Heart right ventricle (tissue), 16 donors: ENCODE measurements at regions of chr2 and their contacts with region 1.

Region 1: DNA sequence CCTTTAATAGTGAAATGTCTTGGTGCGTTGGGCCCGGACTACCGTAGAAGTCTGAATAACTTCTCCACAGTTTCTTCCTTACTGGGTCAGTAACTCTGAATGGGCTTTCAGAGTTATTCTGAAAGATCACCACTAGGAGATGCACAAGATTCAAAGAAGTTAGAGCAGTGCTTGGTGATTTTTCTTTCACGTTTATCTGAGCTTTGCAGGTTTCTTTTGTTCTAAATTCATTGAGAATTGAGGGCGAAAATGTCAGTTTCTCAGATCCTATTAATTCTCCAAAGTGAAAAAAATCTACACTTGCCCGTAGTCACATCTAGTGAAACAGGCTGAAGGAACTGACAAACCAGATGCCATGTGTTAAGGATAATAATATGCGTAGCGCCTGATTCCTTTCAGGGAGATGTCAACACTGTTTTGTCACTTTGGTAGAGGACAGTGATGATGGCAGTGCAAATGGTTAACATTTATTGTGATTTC is 70.1 kb downstream of the QPCT start:
- DNase-seq: no peak
- ATAC-seq: peak; percentile 65 to 91 (median 82)
- H3K4me3 ChIP-seq: peak overlapping the region in 3 of 10 donors; percentile 4 to 29 (median 8)
- H3K27ac ChIP-seq: peak overlapping the region in 6 of 10 donors; percentile 8 to 69 (median 66)
- H3K4me1 ChIP-seq: peaks cover 0 to 19% (median 14%) of the 10 kb centered on the region in 9 donors
- H3K27me3 ChIP-seq: no peaks in the 10 kb centered on the region
- CTCF ChIP-seq: peak; percentile 68 to 92 (median 80)

Region 2: DNA sequence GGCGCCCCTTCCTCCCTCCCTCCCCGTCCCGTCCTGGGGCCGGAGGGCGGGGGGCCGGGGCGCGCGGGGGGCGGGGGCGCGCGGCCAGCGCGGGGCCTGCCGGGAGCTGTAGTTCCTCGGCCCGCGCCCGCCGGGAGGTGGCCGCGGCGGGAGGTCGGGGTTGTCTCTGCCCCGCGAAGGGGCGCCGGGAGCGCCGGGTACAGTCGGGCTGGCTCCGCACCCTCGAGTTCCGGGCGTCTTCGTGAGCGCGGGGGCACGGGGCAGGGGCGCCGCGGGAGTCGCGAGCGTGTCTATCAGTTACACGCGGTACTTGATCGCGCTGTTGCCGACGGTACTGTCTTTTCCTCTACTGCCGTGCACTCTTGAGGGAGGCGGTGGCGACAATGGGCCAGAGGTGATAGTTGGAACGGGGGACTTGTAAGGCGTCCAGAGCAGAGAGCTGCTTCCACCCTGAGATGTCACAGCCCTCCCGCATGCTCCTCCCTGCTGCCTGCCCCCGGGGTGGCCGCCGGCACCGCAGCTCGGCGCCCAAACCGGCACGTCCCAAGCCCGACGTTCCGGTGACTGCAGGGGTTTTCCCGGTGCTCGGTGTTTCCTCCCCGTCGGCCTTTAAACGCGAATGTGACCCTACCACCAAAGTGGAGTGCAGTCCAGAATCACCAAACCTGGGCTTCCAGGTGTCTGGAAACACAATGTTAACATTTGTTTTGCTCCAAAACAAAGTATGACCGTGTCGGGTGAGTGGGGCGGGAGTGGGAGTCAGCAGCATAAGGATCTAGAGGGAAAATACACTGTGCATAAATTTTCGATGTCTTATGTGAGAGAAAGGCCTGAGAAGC is 89.5 kb before region 1 on chr2 and contains the start of gene PRKD3:
- intact Hi-C with region 1: no loop called
- DNase-seq: peak; percentile 43 to 53
- ATAC-seq: peak; percentile 80 to 94 (median 90)
- H3K4me3 ChIP-seq: peak within 1 kb of the TSS; percentile 61 to 91 (median 80)
- H3K27ac ChIP-seq: peak within 1 kb of the TSS; percentile 81 to 95 (median 92)
- H3K4me1 ChIP-seq: peaks cover 0 to 58% (median 45%) of the 10 kb centered on the region in 9 donors
- H3K27me3 ChIP-seq: peaks cover 0 to 7% (median 0%) of the 10 kb centered on the region in 7 donors
- CTCF ChIP-seq: no peak
- total RNA-seq, gene PRKD3: 9.3 to 21.6 (median 13.2) TPM

Region 3: GRCh38 chr2:37523814-37524362 is 109.4 kb after region 1 on chr2:
- intact Hi-C with region 1: loop called in 2 of 10 experiments (anchors 5 to 10 kb)
- DNase-seq: peak in 1 of 2 donors; percentile 72
- ATAC-seq: peak; percentile 93 to 98 (median 97)
- H3K4me3 ChIP-seq: peak overlapping the region in 1 of 10 donors; percentile 4
- H3K27ac ChIP-seq: peak overlapping the region in 9 of 10 donors; percentile 3 to 85 (median 78)
- H3K4me1 ChIP-seq: peaks cover 4 to 39% (median 22%) of the 10 kb centered on the region in 9 donors
- H3K27me3 ChIP-seq: no peaks in the 10 kb centered on the region
- CTCF ChIP-seq: no peak

Region 4: GRCh38 chr2:37543999-37544557 is 129.6 kb after region 1 on chr2:
- intact Hi-C with region 1: loop called in 2 of 10 experiments (anchors 5 to 10 kb)
- DNase-seq: no peak
- ATAC-seq: no peak
- H3K4me3 ChIP-seq: no peak overlapping the region
- H3K27ac ChIP-seq: no peak overlapping the region
- H3K4me1 ChIP-seq: no peaks in the 10 kb centered on the region
- H3K27me3 ChIP-seq: peaks cover 0 to 5% (median 0%) of the 10 kb centered on the region in 7 donors
- CTCF ChIP-seq: no peak

Region 5: DNA sequence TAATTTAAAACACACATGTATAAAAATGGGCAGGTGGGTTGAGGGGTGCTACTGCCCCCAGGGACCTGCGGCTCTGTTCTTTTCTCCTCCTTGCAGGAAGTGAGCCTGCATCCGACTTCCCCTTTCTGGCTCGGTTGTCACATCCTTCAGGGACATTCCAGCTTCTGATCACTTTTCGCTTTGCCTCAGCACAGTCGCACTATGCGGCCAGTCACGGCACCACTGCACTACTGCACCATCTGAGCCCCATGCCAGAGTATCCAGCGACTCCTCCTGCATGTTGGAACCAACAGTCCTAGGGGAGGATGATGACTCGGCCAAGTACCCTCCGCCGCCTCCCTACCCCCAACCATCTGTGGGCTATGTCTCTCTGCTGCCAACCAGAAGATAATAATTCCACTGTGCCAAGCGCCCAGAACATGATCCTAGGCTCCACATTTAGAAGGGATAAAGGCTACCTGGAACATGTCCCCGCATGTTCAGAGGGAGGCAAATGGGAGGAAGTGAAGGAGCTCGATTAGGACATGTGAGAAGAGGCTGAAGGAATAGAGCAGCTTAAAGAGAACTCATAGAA is 239.4 kb after region 1 on chr2:
- intact Hi-C with region 1: loop called in 2 of 10 experiments (anchors 10 kb)
- DNase-seq: peak; percentile 68
- ATAC-seq: peak; percentile 59 to 86 (median 76)
- H3K4me3 ChIP-seq: peak overlapping the region in 7 of 10 donors; percentile 6 to 40 (median 17)
- H3K27ac ChIP-seq: peak overlapping the region; percentile 77 to 99 (median 90)
- H3K4me1 ChIP-seq: peaks cover 46 to 100% (median 97%) of the 10 kb centered on the region in 9 donors
- H3K27me3 ChIP-seq: no peaks in the 10 kb centered on the region
- CTCF ChIP-seq: no peak

Region 6: GRCh38 chr2:37672104-37672869 is 257.8 kb after region 1 on chr2:
- intact Hi-C with region 1: loop called in 7 of 10 experiments (anchors 5 to 10 kb)
- DNase-seq: peak; percentile 79 to 83
- ATAC-seq: peak; percentile 72 to 87 (median 76)
- H3K4me3 ChIP-seq: peak overlapping the region; percentile 78 to 99 (median 95)
- H3K27ac ChIP-seq: peak overlapping the region; percentile 91 to 100 (median 99)
- H3K4me1 ChIP-seq: peaks cover 3 to 61% (median 30%) of the 10 kb centered on the region in 9 donors
- H3K27me3 ChIP-seq: no peaks in the 10 kb centered on the region
- CTCF ChIP-seq: peak in 2 of 9 donors; percentile 8 to 12

Region 7: DNA sequence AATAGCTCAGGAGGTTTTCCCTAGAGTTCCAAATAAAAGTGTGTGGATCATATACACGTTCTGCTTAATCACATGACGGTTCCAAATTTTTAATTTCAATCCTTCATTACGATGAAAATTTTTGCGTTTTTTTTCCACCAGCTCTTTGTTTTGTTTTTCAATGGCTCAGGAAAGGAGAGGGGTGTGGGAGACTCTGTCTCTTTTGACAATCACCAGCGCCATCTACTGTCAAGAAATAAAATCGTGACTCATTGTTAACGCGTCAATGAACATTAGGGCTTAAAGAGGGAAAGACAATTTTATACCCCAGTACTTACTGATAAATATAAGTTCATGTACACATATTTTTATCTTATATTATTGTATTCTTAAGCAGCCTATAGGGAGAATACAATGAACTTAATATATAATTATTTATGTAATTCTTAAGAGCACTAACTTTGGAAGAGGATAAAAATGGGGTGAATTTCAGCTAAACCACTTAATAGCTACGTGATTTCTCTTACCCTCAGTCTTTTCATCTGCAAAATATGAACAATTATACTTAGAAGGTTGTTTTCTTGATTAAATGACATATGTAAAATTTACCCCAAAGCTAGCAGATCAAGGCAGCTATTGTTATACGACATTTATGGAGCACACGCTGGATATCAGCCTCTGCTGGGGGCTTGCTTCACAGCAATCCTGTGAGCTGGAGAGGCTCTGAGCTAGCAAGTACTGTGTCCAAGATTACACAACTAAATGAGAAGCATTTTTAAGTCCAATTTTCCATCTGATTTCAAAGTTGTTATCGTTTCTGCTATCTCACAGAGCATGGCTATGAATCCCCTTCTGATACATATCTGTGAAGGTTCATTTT is 463.2 kb after region 1 on chr2:
- intact Hi-C with region 1: loop called in 8 of 10 experiments (anchors 1 to 5 kb)
- DNase-seq: peak in 1 of 2 donors; percentile 65
- ATAC-seq: peak in 7 of 8 donors; percentile 39 to 77 (median 51)
- H3K4me3 ChIP-seq: no peak overlapping the region
- H3K27ac ChIP-seq: peak overlapping the region in 1 of 10 donors; percentile 29
- H3K4me1 ChIP-seq: peaks cover 4 to 46% (median 41%) of the 10 kb centered on the region in 9 donors
- H3K27me3 ChIP-seq: peaks cover 0 to 15% (median 0%) of the 10 kb centered on the region in 7 donors
- CTCF ChIP-seq: peak; percentile 71 to 88 (median 79)